ENCODE measurements at regions of chr12 and their contacts with region 1.

Region 1: GRCh38 chr12:95003213-95003920 is at the start of gene NDUFA12:
- DNase-seq: peak; percentile 98
- H3K4me3 ChIP-seq: peak within 1 kb of the TSS; percentile 71
- H3K27ac ChIP-seq: peak within 1 kb of the TSS; percentile 84
- H3K4me1 ChIP-seq: peaks cover 4% of the 10 kb centered on the region
- H3K27me3 ChIP-seq: no peaks in the 10 kb centered on the region
- CTCF ChIP-seq: no peak
- total RNA-seq, gene NDUFA12: 143 and 157 TPM in 2 replicates

Region 2: GRCh38 chr12:94941440-94941862 is 61.9 kb before region 1 on chr12:
- CTCF ChIA-PET with region 1: no interaction called
- POLR2A ChIA-PET with region 1: no interaction called
- intact Hi-C with region 1: no loop called
- DNase-seq: peak; percentile 49
- H3K4me3 ChIP-seq: no peak overlapping the region
- H3K27ac ChIP-seq: no peak overlapping the region
- H3K4me1 ChIP-seq: no peaks in the 10 kb centered on the region
- H3K27me3 ChIP-seq: no peaks in the 10 kb centered on the region
- CTCF ChIP-seq: no peak

Region 3: GRCh38 chr12:94954029-94954685 is 49.2 kb before region 1 on chr12:
- CTCF ChIA-PET with region 1: no interaction called
- POLR2A ChIA-PET with region 1: no interaction called
- intact Hi-C with region 1: no loop called
- DNase-seq: peak; percentile 14
- H3K4me3 ChIP-seq: no peak overlapping the region
- H3K27ac ChIP-seq: no peak overlapping the region
- H3K4me1 ChIP-seq: no peaks in the 10 kb centered on the region
- H3K27me3 ChIP-seq: no peaks in the 10 kb centered on the region
- CTCF ChIP-seq: no peak

Region 4: DNA sequence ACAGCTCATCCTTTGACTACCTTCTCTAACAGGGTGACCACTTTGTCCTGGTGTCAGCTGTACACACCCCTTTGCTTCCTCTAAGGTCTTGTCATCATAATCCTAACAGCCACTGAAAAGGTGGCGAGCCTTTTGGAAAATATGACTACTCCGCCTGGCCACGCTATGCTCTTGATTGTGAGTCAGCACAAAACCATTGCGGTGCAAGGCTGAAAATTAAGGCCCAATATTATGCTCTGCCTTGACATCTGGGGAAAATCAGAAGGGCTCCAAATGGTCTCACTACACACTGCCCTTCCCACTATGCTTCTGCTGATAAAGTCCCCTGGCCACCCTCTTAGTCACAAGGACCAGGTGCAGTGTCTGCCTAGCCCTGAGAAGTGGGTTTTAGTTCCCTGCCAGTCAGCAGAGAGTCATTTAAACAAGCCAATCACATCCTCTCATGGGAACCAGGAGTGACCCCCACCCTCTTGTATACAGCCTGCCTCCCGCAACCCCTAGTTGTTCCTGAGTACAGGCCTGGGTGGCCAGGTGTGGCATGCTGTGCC is 179.6 kb after region 1 on chr12:
- CTCF ChIA-PET with region 1: no interaction called
- POLR2A ChIA-PET with region 1: no interaction called
- intact Hi-C with region 1: no loop called
- DNase-seq: no peak
- H3K4me3 ChIP-seq: no peak overlapping the region
- H3K27ac ChIP-seq: no peak overlapping the region
- H3K4me1 ChIP-seq: no peaks in the 10 kb centered on the region
- H3K27me3 ChIP-seq: no peaks in the 10 kb centered on the region
- CTCF ChIP-seq: no peak

Region 5: GRCh38 chr12:95541436-95541835 is 538.1 kb after region 1 on chr12:
- CTCF ChIA-PET with region 1: no interaction called
- POLR2A ChIA-PET with region 1: interaction called, 31 read pairs
- intact Hi-C with region 1: no loop called
- DNase-seq: no peak
- H3K4me3 ChIP-seq: no peak overlapping the region
- H3K27ac ChIP-seq: no peak overlapping the region
- H3K4me1 ChIP-seq: peaks cover 23% of the 10 kb centered on the region
- H3K27me3 ChIP-seq: no peaks in the 10 kb centered on the region
- CTCF ChIP-seq: no peak

Region 6: DNA sequence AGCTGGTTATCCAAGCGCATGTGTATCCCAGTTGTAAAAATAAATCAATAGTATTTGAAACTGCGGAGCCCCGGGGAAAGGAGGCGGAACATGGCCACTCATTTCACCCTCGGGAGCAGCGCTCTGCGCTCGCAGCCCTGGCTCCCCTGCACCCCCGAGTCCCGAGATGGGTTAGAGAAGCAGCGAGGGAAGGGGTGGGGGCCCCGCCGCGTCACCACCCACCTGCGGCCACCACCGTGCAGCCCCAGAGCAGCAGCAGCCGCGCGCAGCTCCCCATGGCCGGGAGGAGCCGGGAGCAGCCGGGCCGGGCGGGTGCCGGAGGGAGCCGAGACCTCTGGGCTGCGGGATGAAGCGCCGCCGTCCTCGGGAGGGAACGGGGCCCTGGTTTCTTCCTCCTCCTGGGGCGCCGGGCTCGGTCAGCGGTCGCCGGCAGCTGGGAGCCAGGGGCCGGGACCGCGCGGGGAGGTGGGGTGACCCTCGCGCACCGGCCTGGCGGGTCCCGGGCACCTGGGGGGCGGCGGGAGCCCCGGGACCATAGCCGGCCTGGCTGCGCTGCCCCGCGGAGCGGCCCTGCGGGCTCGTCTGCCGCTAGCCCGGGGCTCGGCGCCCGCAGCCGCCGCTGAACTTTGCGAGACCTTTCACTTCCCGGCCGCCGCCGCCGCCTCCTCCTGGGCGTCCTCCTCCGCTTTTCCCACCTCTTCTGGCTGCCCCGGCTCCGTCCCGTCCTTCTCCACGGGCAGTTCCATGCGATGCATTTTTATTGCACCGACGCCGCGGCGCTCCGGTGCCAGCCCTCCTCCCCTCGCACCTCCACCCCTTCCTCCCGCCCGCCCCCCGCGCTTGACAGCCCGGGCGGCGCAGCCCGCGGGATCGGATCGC is 786.9 kb after region 1 on chr12 and contains the start of gene NTN4:
- CTCF ChIA-PET with region 1: no interaction called
- POLR2A ChIA-PET with region 1: interaction called, 21 read pairs
- intact Hi-C with region 1: no loop called
- DNase-seq: peak; percentile 15
- H3K4me3 ChIP-seq: peak within 1 kb of the TSS; percentile 54
- H3K27ac ChIP-seq: no peak within 1 kb of the TSS
- H3K4me1 ChIP-seq: peaks cover 5% of the 10 kb centered on the region
- H3K27me3 ChIP-seq: peaks cover 16% of the 10 kb centered on the region
- CTCF ChIP-seq: no peak
- total RNA-seq, gene NTN4: 9.6 and 11.7 TPM in 2 replicates

Measured in A673 (cell line).